CD4-positive, alpha-beta T cell (primary cell): ENCODE measurements at regions of chr6 and their contacts with region 1.

Region 1: GRCh38 chr6:11700118-11700718 is 78.4 kb downstream of the ADTRP start:
- DNase-seq: peak in 4 of 14 experiments; percentile 40 to 70 (median 63)
- ATAC-seq: no peak
- H3K4me3 ChIP-seq: no peak overlapping the region
- H3K4me3 Mint-ChIP-seq: no peak overlapping the region
- H3K27ac ChIP-seq: no peak overlapping the region
- H3K27ac Mint-ChIP-seq: no peak overlapping the region
- H3K4me1 ChIP-seq: peaks cover 2% of the 10 kb centered on the region
- H3K4me1 Mint-ChIP-seq: peaks cover 17% of the 10 kb centered on the region
- H3K27me3 ChIP-seq: no peaks in the 10 kb centered on the region
- H3K27me3 Mint-ChIP-seq: no peaks in the 10 kb centered on the region
- CTCF ChIP-seq: peak; percentile 67

Region 2: DNA sequence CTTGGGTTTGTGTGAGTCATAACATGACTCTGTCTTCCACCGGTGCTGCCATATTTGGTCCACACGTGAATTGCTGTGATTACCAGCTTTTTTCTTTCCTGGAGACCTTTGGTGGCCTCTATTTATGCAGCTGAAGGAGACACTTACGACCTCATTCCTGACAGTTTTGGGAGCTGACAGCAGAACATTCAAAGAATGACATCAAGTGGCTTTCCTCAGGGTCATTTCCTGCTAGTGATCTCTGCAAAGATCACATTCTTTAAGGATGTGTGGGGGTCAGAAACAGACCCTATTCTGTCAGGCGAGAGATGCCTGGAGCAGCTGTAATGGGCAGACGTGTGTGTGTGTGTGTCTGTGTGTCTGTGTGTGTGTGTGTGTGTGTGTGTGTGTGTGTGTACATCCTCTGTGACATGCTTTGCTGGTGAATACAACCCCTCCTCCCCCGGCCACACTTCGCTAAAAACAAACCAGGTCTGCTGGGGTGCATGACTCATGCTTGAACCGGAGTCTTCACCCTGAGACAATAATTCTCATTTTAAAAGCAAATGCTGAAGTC is 47.1 kb before region 1 on chr6:
- CTCF ChIA-PET with region 1: no interaction called
- POLR2A ChIA-PET with region 1: no interaction called
- intact Hi-C with region 1: no loop called
- DNase-seq: peak in 12 of 14 experiments; percentile 4 to 68 (median 35)
- ATAC-seq: peak; percentile 57
- H3K4me3 ChIP-seq: no peak overlapping the region
- H3K4me3 Mint-ChIP-seq: no peak overlapping the region
- H3K27ac ChIP-seq: no peak overlapping the region
- H3K27ac Mint-ChIP-seq: no peak overlapping the region
- H3K4me1 ChIP-seq: peaks cover 2% of the 10 kb centered on the region
- H3K4me1 Mint-ChIP-seq: no peaks in the 10 kb centered on the region
- H3K27me3 ChIP-seq: no peaks in the 10 kb centered on the region
- H3K27me3 Mint-ChIP-seq: no peaks in the 10 kb centered on the region
- CTCF ChIP-seq: no peak

Region 3: DNA sequence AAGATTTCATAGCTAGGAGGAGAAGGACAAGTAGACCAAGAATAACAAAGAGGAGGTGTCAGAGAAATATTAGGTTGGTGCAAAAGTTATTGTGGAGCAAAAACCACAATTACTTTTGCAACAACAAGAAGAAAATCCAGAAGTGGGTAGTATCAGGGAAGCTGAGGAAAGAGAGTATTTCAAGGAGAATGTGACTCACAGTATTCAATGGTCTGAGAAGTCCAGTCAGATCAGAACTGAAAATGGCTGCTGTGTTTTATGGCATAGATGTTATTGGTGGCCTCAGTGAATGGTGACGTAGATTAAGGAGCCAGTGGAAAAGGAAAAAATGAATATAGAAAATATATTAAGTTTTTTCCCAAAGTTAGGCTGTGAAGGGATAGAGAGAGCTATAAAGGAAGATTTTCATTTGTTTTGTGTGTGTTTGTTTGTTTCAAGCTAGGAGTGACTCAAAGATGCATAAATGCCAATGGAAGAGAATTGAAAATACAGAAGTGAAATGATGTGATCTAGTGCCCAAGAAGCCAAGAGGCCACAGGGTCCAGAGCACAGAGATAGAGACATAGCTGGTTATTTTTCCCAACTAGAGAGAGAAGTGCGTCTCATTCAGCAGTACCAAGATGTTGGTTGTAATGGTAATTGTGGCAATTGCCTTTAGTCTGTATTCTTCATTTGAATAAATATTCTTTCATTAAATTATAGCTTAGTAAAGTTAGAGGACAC is 34.5 kb before region 1 on chr6:
- CTCF ChIA-PET with region 1: no interaction called
- POLR2A ChIA-PET with region 1: no interaction called
- intact Hi-C with region 1: no loop called
- DNase-seq: no peak
- ATAC-seq: no peak
- H3K4me3 ChIP-seq: no peak overlapping the region
- H3K4me3 Mint-ChIP-seq: no peak overlapping the region
- H3K27ac ChIP-seq: no peak overlapping the region
- H3K27ac Mint-ChIP-seq: no peak overlapping the region
- H3K4me1 ChIP-seq: no peaks in the 10 kb centered on the region
- H3K4me1 Mint-ChIP-seq: no peaks in the 10 kb centered on the region
- H3K27me3 ChIP-seq: peaks cover 0 to 14% of the 10 kb centered on the region in 2 experiments
- H3K27me3 Mint-ChIP-seq: peaks cover 22% of the 10 kb centered on the region
- CTCF ChIP-seq: no peak

Region 4: DNA sequence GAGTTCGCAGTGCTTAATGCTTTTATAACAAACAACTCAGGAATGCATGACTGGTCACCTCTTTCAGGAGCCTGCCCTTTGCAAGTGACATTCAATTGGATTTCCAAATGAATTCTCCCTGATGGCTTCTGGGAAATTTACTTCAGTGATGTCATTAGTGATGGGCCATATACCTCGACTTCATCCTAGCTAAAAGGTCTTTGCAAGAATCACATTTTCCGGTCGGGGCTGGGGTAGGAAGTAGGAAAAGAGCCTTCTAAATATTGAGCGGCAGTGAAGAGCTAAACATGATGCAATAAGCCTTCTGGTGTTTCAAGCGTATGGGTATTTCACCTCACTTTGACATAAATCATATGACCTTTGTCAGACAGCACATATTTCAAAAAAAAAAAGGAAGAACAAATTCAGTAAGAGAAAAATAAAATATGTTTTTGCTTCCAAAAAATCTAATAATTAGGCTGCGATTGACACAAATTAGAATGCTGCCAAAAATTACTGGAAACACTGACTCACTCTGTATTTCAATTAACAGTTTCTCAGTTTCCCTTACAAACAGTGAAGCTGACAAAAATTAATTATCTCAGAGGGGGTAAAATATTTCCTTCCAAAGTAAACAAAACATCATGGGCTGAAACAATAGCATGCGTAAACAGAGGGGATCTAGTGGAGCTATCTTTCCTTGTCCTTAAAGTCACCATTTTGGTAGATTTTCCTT is 38.6 kb after region 1 on chr6:
- CTCF ChIA-PET with region 1: no interaction called
- POLR2A ChIA-PET with region 1: no interaction called
- intact Hi-C with region 1: loop called in 1 of 2 experiments (anchors 5 kb)
- DNase-seq: peak in 2 of 14 experiments; percentile 28 to 31
- ATAC-seq: no peak
- H3K4me3 ChIP-seq: no peak overlapping the region
- H3K4me3 Mint-ChIP-seq: no peak overlapping the region
- H3K27ac ChIP-seq: no peak overlapping the region
- H3K27ac Mint-ChIP-seq: no peak overlapping the region
- H3K4me1 ChIP-seq: peaks cover 3% of the 10 kb centered on the region
- H3K4me1 Mint-ChIP-seq: no peaks in the 10 kb centered on the region
- H3K27me3 ChIP-seq: no peaks in the 10 kb centered on the region
- H3K27me3 Mint-ChIP-seq: no peaks in the 10 kb centered on the region
- CTCF ChIP-seq: no peak

Region 5: DNA sequence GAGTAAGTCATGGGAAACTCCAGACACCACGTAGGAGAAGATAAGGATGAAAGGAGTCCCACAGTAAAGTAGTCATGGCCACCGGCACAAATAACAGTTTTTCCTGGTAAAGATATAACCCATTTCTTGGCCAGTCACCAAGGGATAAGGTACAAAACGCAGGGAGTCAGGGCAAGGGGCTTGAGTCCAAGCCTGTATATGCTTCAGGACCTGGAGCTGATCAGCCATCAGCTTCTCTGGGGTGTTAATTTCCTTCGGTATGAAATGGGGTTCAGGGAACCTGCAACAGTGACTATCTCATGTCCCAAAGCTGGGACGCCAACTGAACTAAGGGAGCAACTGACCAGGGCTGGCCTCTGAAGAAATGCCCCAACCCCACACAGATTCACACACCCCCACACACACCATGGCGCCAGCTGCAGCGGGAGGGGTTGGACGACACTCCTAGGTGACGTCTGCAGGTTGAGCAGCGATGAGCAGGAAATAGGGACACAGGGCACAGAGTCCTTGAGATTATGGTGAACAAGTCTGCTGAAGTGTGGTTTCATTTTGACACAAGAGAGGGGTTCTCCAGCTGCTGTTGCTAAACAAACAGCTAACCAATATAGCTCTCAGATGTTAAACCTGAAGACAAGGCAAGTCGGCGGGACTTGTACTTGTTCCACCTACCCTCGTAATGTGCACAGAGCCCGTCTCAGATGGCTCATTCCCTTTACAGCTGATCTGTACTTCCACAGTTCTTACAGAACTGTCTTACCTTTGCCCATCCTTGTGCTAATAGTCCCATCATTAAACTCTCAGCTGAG is 85.8 kb after region 1 on chr6:
- CTCF ChIA-PET with region 1: no interaction called
- POLR2A ChIA-PET with region 1: no interaction called
- intact Hi-C with region 1: loop called in 1 of 2 experiments (anchors 5 kb)
- DNase-seq: peak in 10 of 14 experiments; percentile 2 to 64 (median 20)
- ATAC-seq: peak; percentile 85
- H3K4me3 ChIP-seq: peak overlapping the region; percentile 52
- H3K4me3 Mint-ChIP-seq: no peak overlapping the region
- H3K27ac ChIP-seq: no peak overlapping the region
- H3K27ac Mint-ChIP-seq: no peak overlapping the region
- H3K4me1 ChIP-seq: peaks cover 13% of the 10 kb centered on the region
- H3K4me1 Mint-ChIP-seq: peaks cover 9% of the 10 kb centered on the region
- H3K27me3 ChIP-seq: no peaks in the 10 kb centered on the region
- H3K27me3 Mint-ChIP-seq: no peaks in the 10 kb centered on the region
- CTCF ChIP-seq: no peak

Region 6: DNA sequence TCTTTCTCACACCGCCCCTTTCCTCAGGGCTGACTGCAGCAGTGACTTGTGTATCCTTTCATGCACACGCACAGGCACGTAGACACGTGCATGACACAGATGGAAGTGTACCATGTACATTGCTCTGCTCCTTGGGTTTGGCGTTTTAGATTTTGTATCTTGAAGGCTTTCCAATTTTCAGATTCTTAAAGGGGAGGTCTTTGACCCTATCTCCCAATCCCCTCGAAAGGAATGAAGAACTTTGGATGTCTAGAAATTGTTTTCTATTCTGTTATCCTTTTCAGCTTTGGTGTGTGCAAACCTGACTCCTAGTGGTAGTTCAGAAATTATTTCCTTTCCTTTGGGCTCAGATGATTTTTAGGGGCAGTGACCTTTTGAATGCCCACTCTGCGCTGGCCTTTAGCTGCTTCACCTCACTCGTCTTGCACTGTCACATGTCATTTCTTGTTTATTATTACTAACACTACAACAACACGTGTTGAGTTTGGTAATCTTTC is 374.9 kb after region 1 on chr6:
- CTCF ChIA-PET with region 1: no interaction called
- POLR2A ChIA-PET with region 1: no interaction called
- intact Hi-C with region 1: loop called in 1 of 2 experiments (anchors 1 kb)
- DNase-seq: peak in 5 of 14 experiments; percentile 7 to 53 (median 29)
- ATAC-seq: peak; percentile 91
- H3K4me3 ChIP-seq: no peak overlapping the region
- H3K4me3 Mint-ChIP-seq: no peak overlapping the region
- H3K27ac ChIP-seq: no peak overlapping the region
- H3K27ac Mint-ChIP-seq: no peak overlapping the region
- H3K4me1 ChIP-seq: peaks cover 5% of the 10 kb centered on the region
- H3K4me1 Mint-ChIP-seq: peaks cover 66% of the 10 kb centered on the region
- H3K27me3 ChIP-seq: no peaks in the 10 kb centered on the region
- H3K27me3 Mint-ChIP-seq: no peaks in the 10 kb centered on the region
- CTCF ChIP-seq: peak; percentile 60